ENCODE measurements at regions of chr22 and their contacts with region 1.

Region 1: DNA sequence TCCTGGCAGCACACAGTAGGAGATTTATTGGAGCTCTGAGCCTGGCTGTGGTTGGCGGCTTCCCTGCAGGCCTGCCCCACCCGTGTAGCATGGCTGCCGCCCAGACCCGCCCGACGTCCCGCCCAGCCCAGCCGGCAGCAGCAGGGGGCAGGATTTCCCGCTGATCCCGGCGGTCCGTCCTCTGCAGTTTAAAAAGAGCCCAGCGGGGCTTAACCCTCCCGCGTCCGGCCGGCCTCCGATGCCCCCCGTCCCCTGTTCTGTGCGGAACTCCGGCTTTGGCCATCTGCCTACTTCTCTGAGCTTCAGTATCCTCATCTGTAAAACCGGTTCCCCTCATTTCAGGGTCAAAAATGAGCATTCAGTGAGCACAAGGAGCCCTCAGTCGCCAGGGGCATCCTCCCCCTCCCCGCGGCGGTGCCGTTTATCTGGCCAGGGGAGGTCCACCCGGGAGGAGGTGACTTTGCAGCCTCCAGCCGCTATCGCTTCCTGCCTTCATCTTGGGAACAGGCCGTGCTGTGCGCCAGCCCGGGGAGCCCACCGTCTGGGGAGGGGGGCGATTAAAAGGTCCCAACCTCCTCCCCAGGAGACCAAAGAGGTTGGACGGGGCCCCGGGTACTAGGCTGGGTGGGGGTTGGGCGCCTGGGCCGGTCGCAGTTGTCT is at the start of gene GAS2L1:
- H3K4me3 ChIP-seq: peak within 1 kb of the TSS; percentile 50
- H3K27ac ChIP-seq: peak within 1 kb of the TSS; percentile 94
- H3K4me1 ChIP-seq: peaks cover 7% of the 10 kb centered on the region; the same call in 1 of the 2 replicates
- CTCF ChIP-seq: peak; percentile 85

Region 2: DNA sequence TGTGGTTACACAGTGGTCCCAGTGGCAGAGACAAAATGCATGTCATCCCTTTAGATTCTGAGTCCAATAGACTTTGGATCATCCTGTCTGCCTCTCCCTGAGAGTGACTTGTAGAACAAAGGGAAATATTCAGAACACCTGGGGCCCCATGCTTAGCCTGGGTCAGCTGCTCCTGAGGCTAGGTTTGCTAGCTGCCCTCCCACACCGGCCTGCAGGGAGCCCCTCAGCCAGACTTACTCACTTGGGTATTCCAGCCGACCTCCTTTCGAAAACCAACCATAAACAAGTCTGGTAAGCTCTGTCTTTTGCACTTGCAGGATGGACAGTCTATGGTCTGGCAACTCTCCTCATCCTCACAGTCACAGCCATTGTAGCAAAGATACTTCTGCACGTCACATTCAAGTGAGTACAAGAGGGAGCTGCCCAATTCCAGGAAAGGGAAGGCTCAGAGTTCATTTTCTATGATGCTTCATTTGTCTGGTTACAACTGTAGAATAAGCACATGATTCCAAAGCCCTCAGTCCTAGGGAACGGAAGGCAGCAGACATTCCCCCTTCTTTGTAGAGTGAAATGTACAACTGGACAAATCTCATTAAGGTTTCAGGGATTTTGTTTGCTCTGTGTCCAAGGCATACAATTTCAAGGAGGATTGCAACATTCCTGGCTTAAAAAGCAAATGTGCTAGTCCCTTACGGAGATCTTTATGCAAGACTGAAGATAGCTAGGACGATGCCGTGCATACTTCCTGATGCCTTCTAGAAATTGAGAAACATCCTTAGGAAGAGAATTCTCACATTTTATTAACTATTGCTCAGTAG is 166.1 kb before region 1 on chr22:
- CTCF ChIA-PET with region 1: no interaction called
- POLR2A ChIA-PET with region 1: no interaction called
- H3K4me3 ChIP-seq: no peak overlapping the region
- H3K27ac ChIP-seq: no peak overlapping the region
- H3K4me1 ChIP-seq: no peaks in the 10 kb centered on the region
- CTCF ChIP-seq: no peak

Region 3: GRCh38 chr22:29291215-29291614 is 15.1 kb before region 1 on chr22:
- CTCF ChIA-PET with region 1: interaction called, 5 read pairs
- POLR2A ChIA-PET with region 1: interaction called, 11 read pairs
- H3K4me3 ChIP-seq: no peak overlapping the region
- H3K27ac ChIP-seq: no peak overlapping the region
- H3K4me1 ChIP-seq: no peaks in the 10 kb centered on the region
- CTCF ChIP-seq: no peak

Region 4: GRCh38 chr22:29320546-29320945 is 14.2 kb after region 1 on chr22:
- CTCF ChIA-PET with region 1: interaction called, 15 read pairs
- POLR2A ChIA-PET with region 1: interaction called, 5 read pairs
- H3K4me3 ChIP-seq: no peak overlapping the region
- H3K27ac ChIP-seq: no peak overlapping the region
- H3K4me1 ChIP-seq: no peaks in the 10 kb centered on the region; the same call in 1 of the 2 replicates
- CTCF ChIP-seq: peak; percentile 32; the same call in 1 of the 2 replicates

Region 5: GRCh38 chr22:29330753-29331152 is 24.4 kb after region 1 on chr22:
- CTCF ChIA-PET with region 1: no interaction called
- POLR2A ChIA-PET with region 1: no interaction called
- H3K4me3 ChIP-seq: no peak overlapping the region
- H3K27ac ChIP-seq: peak overlapping the region; percentile 16; the same call in 1 of the 2 replicates
- H3K4me1 ChIP-seq: no peaks in the 10 kb centered on the region
- CTCF ChIP-seq: no peak

Region 6: GRCh38 chr22:29587938-29588699 is 281.8 kb after region 1 on chr22:
- CTCF ChIA-PET with region 1: no interaction called
- POLR2A ChIA-PET with region 1: no interaction called
- H3K4me3 ChIP-seq: no peak overlapping the region
- H3K27ac ChIP-seq: no peak overlapping the region
- H3K4me1 ChIP-seq: no peaks in the 10 kb centered on the region
- CTCF ChIP-seq: no peak

Measured in HEK293 (cell line).